Left colon (tissue), 2 donors: ENCODE measurements at regions of chr13 and their contacts with region 1.

Region 1: DNA sequence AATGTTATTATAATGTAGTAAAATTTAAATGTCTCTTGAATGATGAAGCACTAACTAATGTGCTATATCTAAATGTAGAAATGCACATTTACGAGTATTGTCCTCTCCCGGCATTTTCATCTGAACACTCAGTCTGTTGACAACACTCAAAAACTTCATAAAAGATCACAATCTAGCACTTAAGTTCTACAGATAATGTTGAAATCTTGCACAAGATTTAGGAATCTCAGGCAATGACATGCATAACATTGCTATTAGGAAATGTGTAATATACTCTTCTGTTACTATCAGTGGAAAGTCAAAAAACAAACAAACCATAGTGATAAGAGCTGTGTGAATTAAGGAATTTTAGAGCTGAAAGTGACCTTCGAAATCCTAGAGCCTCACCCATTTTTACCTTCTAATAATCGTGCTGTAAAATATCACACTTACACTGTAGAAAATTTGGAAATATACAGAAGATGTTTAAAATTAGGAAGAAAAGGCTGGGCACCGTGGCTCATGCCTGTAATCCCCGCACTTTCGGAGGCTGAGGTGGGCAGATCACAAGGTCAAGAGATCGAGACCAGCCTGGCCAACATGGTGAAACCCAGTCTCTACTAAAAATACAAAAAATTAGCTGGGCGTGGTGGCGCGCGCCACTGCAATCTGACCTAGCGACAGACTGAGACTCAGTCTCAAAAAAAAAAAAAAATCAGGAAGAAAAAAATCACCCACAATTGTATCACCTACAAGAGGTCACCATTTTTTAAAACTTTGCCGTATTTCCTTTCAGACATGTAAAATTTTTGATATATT is 37.7 kb upstream of the XPO4 start:
- DNase-seq: no peak
- ATAC-seq: no peak

Region 2: DNA sequence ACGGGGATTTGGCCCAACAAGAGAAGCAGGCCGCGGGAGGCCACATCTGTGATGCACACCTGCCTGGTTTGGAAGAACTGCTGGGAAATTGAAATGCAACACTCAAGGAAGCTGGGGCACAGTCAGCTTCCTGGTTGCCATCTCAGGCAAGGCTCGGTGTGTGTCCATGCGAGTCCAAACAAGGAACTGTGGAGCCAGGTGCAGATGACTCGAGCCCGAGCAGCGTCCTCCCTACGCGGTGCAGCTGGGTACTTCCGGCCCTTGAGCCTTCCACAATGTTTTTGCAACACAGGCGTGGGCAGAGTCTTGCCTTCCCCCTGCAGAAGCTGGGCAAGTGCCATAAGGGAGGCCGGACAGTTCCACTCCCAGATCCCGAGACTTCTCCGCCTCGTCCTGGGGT is 509.2 kb before region 1 on chr13:
- intact Hi-C with region 1: no loop called
- DNase-seq: no peak
- ATAC-seq: no peak

Region 3: GRCh38 chr13:21297914-21298831 is 357.9 kb after region 1 on chr13:
- intact Hi-C with region 1: loop called in 1 of 2 experiments (anchors 5 kb)
- DNase-seq: peak; percentile 83 to 88
- ATAC-seq: peak; percentile 98